ENCODE measurements at regions of chr12 and their contacts with region 1.

Region 1: GRCh38 chr12:111482462-111482861 is 76.7 kb downstream of the SH2B3 start:
- DNase-seq: peak in 1 of 35 experiments; percentile 24
- ATAC-seq: peak in 1 of 4 experiments; percentile 29
- H3K4me3 ChIP-seq: no peak overlapping the region
- H3K4me3 Mint-ChIP-seq: no peak overlapping the region
- H3K27ac ChIP-seq: no peak overlapping the region
- H3K27ac Mint-ChIP-seq: no peak overlapping the region
- H3K4me1 ChIP-seq: no peaks in the 10 kb centered on the region
- H3K4me1 Mint-ChIP-seq: no peaks in the 10 kb centered on the region
- H3K27me3 ChIP-seq: no peaks in the 10 kb centered on the region
- H3K27me3 Mint-ChIP-seq: no peaks in the 10 kb centered on the region

Region 2: GRCh38 chr12:111505601-111506036 is 23.2 kb after region 1 on chr12:
- CTCF ChIA-PET with region 1: interaction called in 1 of 2 experiments, 10 read pairs
- POLR2A ChIA-PET with region 1: no interaction called
- DNase-seq: peak in 1 of 35 experiments; percentile 52
- ATAC-seq: no peak
- H3K4me3 ChIP-seq: no peak overlapping the region
- H3K4me3 Mint-ChIP-seq: no peak overlapping the region
- H3K27ac ChIP-seq: no peak overlapping the region
- H3K27ac Mint-ChIP-seq: peak overlapping the region; percentile 1 to 26
- H3K4me1 ChIP-seq: peaks cover 0 to 2% of the 10 kb centered on the region in 2 experiments
- H3K4me1 Mint-ChIP-seq: peaks cover 5 to 10% (median 10%) of the 10 kb centered on the region in 3 donors
- H3K27me3 ChIP-seq: no peaks in the 10 kb centered on the region
- H3K27me3 Mint-ChIP-seq: no peaks in the 10 kb centered on the region